ENCODE measurements at regions of chr5 and their contacts with region 1.

Region 1: GRCh38 chr5:36392186-36392585 is 90.5 kb upstream of the RANBP3L start:
- DNase-seq: no peak
- ATAC-seq: no peak
- H3K4me3 Mint-ChIP-seq: no peak overlapping the region
- H3K27ac Mint-ChIP-seq: no peak overlapping the region
- H3K4me1 Mint-ChIP-seq: no peaks in the 10 kb centered on the region
- H3K27me3 Mint-ChIP-seq: peaks cover 8% of the 10 kb centered on the region

Region 2: DNA sequence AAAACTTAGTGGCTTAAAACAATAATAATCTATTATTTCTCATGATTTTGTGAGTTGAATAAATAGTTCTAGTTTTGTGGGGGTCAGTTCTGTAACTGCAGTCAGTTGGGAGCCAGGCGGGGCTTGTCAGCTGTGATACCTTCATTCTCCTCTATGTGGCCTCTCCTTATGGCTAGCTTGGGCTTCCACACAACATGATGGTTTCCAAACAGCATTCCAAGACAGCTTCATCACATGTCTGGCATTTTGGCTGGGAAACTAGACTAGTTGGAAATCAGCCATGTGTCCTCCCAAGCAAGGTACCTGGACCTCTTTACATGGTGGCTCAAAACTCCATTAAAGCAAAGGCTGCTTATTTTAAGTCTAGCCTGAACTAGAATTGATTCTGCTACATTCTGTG is 29.1 kb before region 1 on chr5:
- CTCF ChIA-PET with region 1: no interaction called
- POLR2A ChIA-PET with region 1: no interaction called
- intact Hi-C with region 1: no loop called
- DNase-seq: no peak
- ATAC-seq: no peak
- H3K4me3 Mint-ChIP-seq: no peak overlapping the region
- H3K27ac Mint-ChIP-seq: no peak overlapping the region
- H3K4me1 Mint-ChIP-seq: no peaks in the 10 kb centered on the region
- H3K27me3 Mint-ChIP-seq: no peaks in the 10 kb centered on the region

Region 3: GRCh38 chr5:36561601-36562000 is 169.4 kb after region 1 on chr5:
- CTCF ChIA-PET with region 1: no interaction called
- POLR2A ChIA-PET with region 1: interaction called, 10 read pairs
- intact Hi-C with region 1: no loop called
- DNase-seq: no peak
- ATAC-seq: no peak
- H3K4me3 Mint-ChIP-seq: no peak overlapping the region
- H3K27ac Mint-ChIP-seq: no peak overlapping the region
- H3K4me1 Mint-ChIP-seq: no peaks in the 10 kb centered on the region
- H3K27me3 Mint-ChIP-seq: no peaks in the 10 kb centered on the region

Region 4: DNA sequence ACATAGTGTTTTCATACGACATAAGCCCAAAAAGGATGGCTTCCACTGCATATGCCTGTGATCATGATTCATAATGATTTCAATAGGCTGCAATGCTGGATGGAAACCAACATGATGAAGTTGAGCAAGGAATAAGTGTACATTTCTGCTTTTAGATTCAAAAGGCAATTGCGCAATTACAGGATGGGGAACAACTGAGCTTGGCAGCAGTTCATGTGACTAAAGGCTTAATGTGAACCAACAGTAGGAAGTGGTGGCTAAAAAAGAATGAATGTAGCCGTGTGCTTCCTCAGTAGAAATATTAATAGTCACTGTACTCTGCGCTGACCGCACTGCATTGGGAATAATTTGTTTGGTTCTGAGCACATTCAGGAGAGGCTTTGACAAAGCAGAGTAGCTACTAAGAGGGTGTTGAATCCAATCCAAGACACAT is 265.4 kb after region 1 on chr5:
- CTCF ChIA-PET with region 1: no interaction called
- POLR2A ChIA-PET with region 1: no interaction called
- intact Hi-C with region 1: no loop called
- DNase-seq: no peak
- ATAC-seq: no peak
- H3K4me3 Mint-ChIP-seq: no peak overlapping the region
- H3K27ac Mint-ChIP-seq: no peak overlapping the region
- H3K4me1 Mint-ChIP-seq: no peaks in the 10 kb centered on the region
- H3K27me3 Mint-ChIP-seq: peaks cover 8% of the 10 kb centered on the region